ENCODE measurements at regions of chr19 and their contacts with region 1.

Region 1: GRCh38 chr19:55279770-55280643 is at the start of gene HSPBP1:
- DNase-seq: peak; percentile 94
- ATAC-seq: peak; percentile 90
- total RNA-seq, gene HSPBP1: 30.2 TPM

Region 2: GRCh38 chr19:55259540-55260210 is 20.3 kb before region 1 on chr19:
- intact Hi-C with region 1: loop called (anchors 1 kb)
- DNase-seq: no peak
- ATAC-seq: no peak

Region 3: DNA sequence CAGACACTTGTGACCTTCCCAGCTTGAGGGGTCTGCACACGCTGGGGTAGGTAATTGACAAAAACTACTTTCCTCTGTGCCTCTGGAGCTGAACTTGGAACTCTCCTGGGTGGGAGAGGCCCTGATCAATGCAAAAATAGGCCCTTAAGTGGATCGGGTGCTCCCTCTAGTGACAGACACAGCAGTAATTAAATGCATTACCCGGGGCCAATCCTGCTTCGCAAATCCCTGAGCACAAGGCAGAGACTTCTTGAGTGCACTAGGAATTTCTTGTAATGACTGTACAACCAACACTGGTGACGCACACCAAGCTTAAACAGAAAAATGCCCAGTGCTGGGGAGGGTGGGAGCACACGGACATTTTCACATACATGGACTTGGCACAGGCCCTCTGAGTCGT is 138.2 kb after region 1 on chr19:
- intact Hi-C with region 1: no loop called
- DNase-seq: no peak
- ATAC-seq: peak; percentile 88

Measured in Right ventricle myocardium inferior (tissue), 1 donor.